CD4-positive, alpha-beta T cell (primary cell): ENCODE measurements at regions of chr11 and their contacts with region 1.

Region 1: GRCh38 chr11:406978-407739 is 7.6 kb downstream of the SIGIRR start:
- DNase-seq: peak; percentile 84 to 97 (median 91)
- ATAC-seq: peak; percentile 84
- H3K4me3 ChIP-seq: peak overlapping the region; percentile 39
- H3K4me3 Mint-ChIP-seq: no peak overlapping the region
- H3K27ac ChIP-seq: peak overlapping the region; percentile 64 to 67
- H3K27ac Mint-ChIP-seq: peak overlapping the region; percentile 76
- H3K4me1 ChIP-seq: peaks cover 46% of the 10 kb centered on the region
- H3K4me1 Mint-ChIP-seq: peaks cover 8% of the 10 kb centered on the region
- H3K27me3 ChIP-seq: no peaks in the 10 kb centered on the region
- H3K27me3 Mint-ChIP-seq: no peaks in the 10 kb centered on the region
- CTCF ChIP-seq: no peak

Region 2: DNA sequence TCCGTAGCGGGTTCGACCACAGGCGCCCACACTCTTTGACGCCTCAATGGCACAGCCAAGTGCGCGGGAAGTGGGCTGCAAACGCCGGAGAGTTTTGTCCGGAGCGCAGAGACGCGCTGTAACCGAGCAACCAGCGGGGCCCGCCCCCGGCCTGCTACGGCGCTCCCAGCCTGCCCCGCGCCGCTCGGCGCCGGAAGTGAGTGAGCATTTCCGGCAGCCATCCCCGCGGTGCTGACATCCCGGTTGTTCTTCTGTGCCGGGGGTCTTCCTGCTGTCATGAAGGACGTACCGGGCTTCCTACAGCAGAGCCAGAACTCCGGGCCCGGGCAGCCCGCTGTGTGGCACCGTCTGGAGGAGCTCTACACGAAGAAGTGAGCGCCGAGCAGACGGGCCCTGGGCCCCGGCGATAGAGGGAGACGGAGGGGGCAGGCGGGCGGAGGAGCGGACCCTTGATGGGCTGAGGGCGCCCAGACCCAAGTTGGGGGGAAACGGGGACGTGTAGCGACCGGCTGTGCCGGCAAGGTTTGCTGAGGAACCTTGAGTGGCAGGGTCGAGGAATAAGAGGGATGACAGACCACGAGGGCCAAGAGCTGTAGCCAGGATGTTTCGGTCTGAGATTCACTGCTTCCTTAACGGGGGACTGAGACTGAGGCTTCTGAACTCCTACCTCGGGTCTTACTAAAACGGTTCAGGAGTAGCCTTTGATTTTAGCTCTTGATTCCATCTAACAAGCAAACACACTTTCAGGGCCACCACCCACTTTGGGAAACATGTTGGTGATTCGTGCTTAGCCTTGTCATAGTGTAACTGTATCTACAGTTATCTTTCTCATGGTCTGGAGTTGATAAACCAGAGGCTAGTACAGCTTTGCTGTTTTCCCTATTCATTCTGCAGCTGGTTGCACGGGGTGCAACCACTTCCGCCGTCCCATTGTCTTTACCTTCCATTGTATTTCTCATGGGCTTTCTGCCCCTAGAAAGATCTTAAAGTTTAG is 170.1 kb before region 1 on chr11 and contains the start of gene PSMD13:
- CTCF ChIA-PET with region 1: no interaction called
- POLR2A ChIA-PET with region 1: interaction called, 5 read pairs
- intact Hi-C with region 1: loop called in 1 of 2 experiments (anchors 5 kb)
- DNase-seq: peak; percentile 76 to 94 (median 84)
- ATAC-seq: peak; percentile 79
- H3K4me3 ChIP-seq: peak within 1 kb of the TSS; percentile 91
- H3K4me3 Mint-ChIP-seq: peak within 1 kb of the TSS; percentile 100
- H3K27ac ChIP-seq: peak within 1 kb of the TSS; percentile 97 to 100
- H3K27ac Mint-ChIP-seq: peak within 1 kb of the TSS; percentile 91
- H3K4me1 ChIP-seq: peaks cover 27% of the 10 kb centered on the region
- H3K4me1 Mint-ChIP-seq: peaks cover 55% of the 10 kb centered on the region
- H3K27me3 ChIP-seq: no peaks in the 10 kb centered on the region
- H3K27me3 Mint-ChIP-seq: no peaks in the 10 kb centered on the region
- CTCF ChIP-seq: peak; percentile 31
- total RNA-seq, gene PSMD13: 56.9 to 57.8 TPM

Region 3: DNA sequence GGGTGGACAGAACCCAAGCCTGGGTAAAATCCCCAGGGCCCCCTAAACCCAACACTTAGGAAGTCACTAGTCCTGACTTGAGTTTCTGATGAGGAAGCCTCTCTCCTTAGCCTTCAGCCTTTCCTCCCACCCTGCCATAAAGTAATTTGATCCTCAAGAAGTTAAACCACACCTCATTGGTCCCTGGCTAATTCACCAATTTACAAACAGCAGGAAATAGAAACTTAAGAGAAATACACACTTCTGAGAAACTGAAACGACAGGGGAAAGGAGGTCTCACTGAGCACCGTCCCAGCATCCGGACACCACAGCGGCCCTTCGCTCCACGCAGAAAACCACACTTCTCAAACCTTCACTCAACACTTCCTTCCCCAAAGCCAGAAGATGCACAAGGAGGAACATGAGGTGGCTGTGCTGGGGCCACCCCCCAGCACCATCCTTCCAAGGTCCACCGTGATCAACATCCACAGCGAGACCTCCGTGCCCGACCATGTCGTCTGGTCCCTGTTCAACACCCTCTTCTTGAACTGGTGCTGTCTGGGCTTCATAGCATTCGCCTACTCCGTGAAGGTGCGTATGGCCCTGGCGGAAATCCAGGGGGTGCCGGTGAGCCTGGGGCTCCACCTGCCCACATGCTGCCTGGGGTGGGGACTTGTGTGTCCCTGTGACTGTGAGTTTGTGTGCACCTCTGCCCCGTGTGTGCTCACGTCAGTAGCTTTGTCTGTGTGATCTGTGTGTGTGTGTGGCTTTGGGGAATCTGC is 93.2 kb before region 1 on chr11 and contains the start of gene IFITM1:
- CTCF ChIA-PET with region 1: no interaction called
- POLR2A ChIA-PET with region 1: interaction called, 11 read pairs
- intact Hi-C with region 1: no loop called
- DNase-seq: peak in 13 of 14 experiments; percentile 40 to 89 (median 70)
- ATAC-seq: peak; percentile 62
- H3K4me3 ChIP-seq: peak within 1 kb of the TSS; percentile 90
- H3K4me3 Mint-ChIP-seq: peak within 1 kb of the TSS; percentile 97
- H3K27ac ChIP-seq: peak within 1 kb of the TSS; percentile 82 to 93
- H3K27ac Mint-ChIP-seq: peak within 1 kb of the TSS; percentile 98
- H3K4me1 ChIP-seq: peaks cover 56% of the 10 kb centered on the region
- H3K4me1 Mint-ChIP-seq: peaks cover 50% of the 10 kb centered on the region
- H3K27me3 ChIP-seq: no peaks in the 10 kb centered on the region
- H3K27me3 Mint-ChIP-seq: no peaks in the 10 kb centered on the region
- CTCF ChIP-seq: no peak
- total RNA-seq, gene IFITM1: 286 to 306 TPM

Region 4: DNA sequence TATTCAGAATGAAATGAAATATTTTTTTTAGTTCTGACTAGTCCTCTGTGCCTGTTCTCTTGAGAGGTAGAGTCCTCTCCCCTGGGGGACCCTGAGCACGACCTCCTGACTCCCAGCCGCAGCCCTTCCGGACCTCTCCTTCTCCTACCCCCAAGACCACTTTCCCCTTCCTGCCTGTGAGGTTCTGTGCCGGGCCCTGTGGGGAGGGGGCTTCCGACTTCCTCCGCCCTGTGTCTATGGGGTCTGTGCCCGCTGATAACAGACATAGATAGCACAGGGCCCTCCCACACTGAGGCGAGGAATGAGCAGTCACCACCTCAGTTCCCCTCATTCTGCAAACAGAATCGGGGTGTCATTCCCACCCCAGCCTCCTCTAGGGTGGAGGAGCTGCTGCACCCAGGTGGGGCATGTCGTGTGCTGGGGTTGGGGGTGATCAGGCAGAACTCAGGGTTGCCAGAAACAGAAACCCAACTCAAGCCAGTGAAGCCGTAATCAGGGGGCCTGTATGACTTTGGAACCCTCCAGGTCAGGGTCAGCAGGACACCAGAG is 25.0 kb before region 1 on chr11:
- CTCF ChIA-PET with region 1: no interaction called
- POLR2A ChIA-PET with region 1: no interaction called
- intact Hi-C with region 1: no loop called
- DNase-seq: no peak
- ATAC-seq: no peak
- H3K4me3 ChIP-seq: no peak overlapping the region
- H3K4me3 Mint-ChIP-seq: no peak overlapping the region
- H3K27ac ChIP-seq: no peak overlapping the region
- H3K27ac Mint-ChIP-seq: no peak overlapping the region
- H3K4me1 ChIP-seq: peaks cover 8% of the 10 kb centered on the region
- H3K4me1 Mint-ChIP-seq: peaks cover 5% of the 10 kb centered on the region
- H3K27me3 ChIP-seq: no peaks in the 10 kb centered on the region
- H3K27me3 Mint-ChIP-seq: peaks cover 20% of the 10 kb centered on the region
- CTCF ChIP-seq: no peak

Region 5: GRCh38 chr11:396948-397548 is 10.1 kb before region 1 on chr11:
- CTCF ChIA-PET with region 1: interaction called, 9 read pairs
- POLR2A ChIA-PET with region 1: interaction called, 19 read pairs
- intact Hi-C with region 1: no loop called
- DNase-seq: peak in 7 of 14 experiments; percentile 31 to 71 (median 62)
- ATAC-seq: peak; percentile 68
- H3K4me3 ChIP-seq: peak overlapping the region; percentile 47
- H3K4me3 Mint-ChIP-seq: no peak overlapping the region
- H3K27ac ChIP-seq: no peak overlapping the region
- H3K27ac Mint-ChIP-seq: no peak overlapping the region
- H3K4me1 ChIP-seq: peaks cover 24% of the 10 kb centered on the region
- H3K4me1 Mint-ChIP-seq: peaks cover 5% of the 10 kb centered on the region
- H3K27me3 ChIP-seq: no peaks in the 10 kb centered on the region
- H3K27me3 Mint-ChIP-seq: peaks cover 16% of the 10 kb centered on the region
- CTCF ChIP-seq: peak; percentile 39

Region 6: GRCh38 chr11:431921-432800 is 25.0 kb after region 1 on chr11:
- CTCF ChIA-PET with region 1: no interaction called
- POLR2A ChIA-PET with region 1: no interaction called
- intact Hi-C with region 1: no loop called
- DNase-seq: no peak
- ATAC-seq: no peak
- H3K4me3 ChIP-seq: no peak overlapping the region
- H3K4me3 Mint-ChIP-seq: no peak overlapping the region
- H3K27ac ChIP-seq: no peak overlapping the region
- H3K27ac Mint-ChIP-seq: no peak overlapping the region
- H3K4me1 ChIP-seq: peaks cover 1% of the 10 kb centered on the region
- H3K4me1 Mint-ChIP-seq: peaks cover 2% of the 10 kb centered on the region
- H3K27me3 ChIP-seq: no peaks in the 10 kb centered on the region
- H3K27me3 Mint-ChIP-seq: no peaks in the 10 kb centered on the region
- CTCF ChIP-seq: no peak

Region 7: DNA sequence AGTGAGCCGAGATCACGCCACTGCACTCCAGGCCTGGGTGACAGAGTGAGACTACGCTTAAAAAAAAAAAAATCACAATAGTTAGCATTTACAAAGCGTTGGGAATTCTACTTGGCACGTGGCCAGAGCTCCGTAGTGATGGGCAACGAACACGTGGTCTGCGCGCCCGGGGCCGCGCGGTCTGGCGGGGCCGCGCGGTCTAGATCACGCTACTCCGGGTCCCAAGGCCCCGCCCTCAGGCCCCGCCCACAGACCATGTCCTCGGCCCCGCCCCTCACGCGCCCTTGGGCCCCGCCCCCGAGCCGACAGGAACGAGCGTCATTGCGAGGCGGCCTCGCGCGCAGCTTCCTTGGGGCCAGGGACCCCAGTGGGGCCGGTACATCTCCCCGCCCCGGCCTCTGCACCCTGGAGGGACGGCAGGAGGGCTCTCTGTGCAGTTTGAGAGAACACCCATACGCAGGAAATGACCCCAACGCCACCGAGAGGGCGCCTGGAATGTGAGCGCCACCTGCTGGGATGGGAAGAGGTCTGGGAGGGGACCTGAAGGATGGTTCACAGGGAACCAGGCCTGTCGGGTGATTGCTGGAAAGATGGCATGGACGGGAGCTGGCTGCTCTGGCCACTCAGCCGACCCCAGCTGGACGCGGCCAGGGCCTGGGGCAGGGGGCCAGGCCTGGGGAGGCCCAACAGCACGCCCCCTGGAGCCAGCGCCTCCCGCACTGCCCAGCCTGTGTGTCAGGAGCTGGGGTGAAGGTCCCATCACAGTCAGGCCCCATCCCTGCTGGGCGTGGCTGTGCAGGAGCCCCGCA is 41.0 kb after region 1 on chr11:
- CTCF ChIA-PET with region 1: interaction called, 39 read pairs
- POLR2A ChIA-PET with region 1: interaction called, 88 read pairs
- intact Hi-C with region 1: loop called (anchors 1 to 2 kb)
- DNase-seq: peak; percentile 91 to 98 (median 94)
- ATAC-seq: peak; percentile 66
- H3K4me3 ChIP-seq: peak overlapping the region; percentile 63
- H3K4me3 Mint-ChIP-seq: peak overlapping the region; percentile 93
- H3K27ac ChIP-seq: peak overlapping the region; percentile 84 to 89
- H3K27ac Mint-ChIP-seq: peak overlapping the region; percentile 95
- H3K4me1 ChIP-seq: peaks cover 38% of the 10 kb centered on the region
- H3K4me1 Mint-ChIP-seq: peaks cover 26% of the 10 kb centered on the region
- H3K27me3 ChIP-seq: no peaks in the 10 kb centered on the region
- H3K27me3 Mint-ChIP-seq: no peaks in the 10 kb centered on the region
- CTCF ChIP-seq: peak; percentile 93

Region 8: GRCh38 chr11:554824-555472 is 147.8 kb after region 1 on chr11:
- CTCF ChIA-PET with region 1: no interaction called
- POLR2A ChIA-PET with region 1: no interaction called
- intact Hi-C with region 1: no loop called
- DNase-seq: peak; percentile 57 to 92 (median 77)
- ATAC-seq: peak; percentile 80
- H3K4me3 ChIP-seq: peak overlapping the region; percentile 48
- H3K4me3 Mint-ChIP-seq: peak overlapping the region; percentile 34
- H3K27ac ChIP-seq: no peak overlapping the region
- H3K27ac Mint-ChIP-seq: no peak overlapping the region
- H3K4me1 ChIP-seq: peaks cover 34% of the 10 kb centered on the region
- H3K4me1 Mint-ChIP-seq: peaks cover 4% of the 10 kb centered on the region
- H3K27me3 ChIP-seq: no peaks in the 10 kb centered on the region
- H3K27me3 Mint-ChIP-seq: no peaks in the 10 kb centered on the region
- CTCF ChIP-seq: peak; percentile 53